Sciatic nerve (tissue), 2 donors: ENCODE measurements at regions of chr12 and their contacts with region 1.

Region 1: DNA sequence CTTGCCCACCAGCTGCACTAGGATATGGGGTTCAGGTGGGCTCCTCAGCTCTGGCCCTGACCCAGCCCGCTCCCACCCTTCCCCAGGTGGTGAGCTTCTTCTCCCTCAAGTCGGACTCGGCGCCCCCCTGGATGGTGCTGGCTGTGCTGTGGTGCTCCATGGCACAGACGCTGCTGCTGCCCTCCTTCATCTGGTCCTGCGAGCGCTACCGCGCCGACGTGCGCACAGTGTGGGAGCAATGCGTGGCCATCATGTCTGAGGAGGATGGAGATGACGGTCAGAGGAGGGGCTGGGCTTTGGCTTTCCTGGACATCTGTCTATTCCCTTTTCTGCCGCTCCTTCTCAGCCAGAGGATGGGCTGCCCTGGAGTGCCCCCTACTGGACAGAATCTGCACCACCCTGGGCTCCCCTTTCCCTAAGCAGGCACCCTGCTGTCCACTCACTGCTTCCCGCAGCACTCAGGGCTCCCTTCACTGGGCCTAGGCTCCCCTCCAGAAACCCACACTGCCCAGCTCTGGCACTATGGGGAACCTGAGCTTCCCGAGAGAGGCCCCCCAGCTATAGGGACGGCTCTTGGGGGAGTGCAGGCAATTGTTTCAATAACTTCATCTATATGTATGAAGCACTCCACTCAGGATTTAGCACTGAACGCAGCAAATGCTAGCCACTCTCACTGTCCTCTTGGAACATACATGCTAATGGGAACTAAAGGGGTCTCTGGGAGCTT is 2.6 kb upstream of the P3H3 start:
- DNase-seq: peak; percentile 94
- ATAC-seq: peak; percentile 71

Region 2: GRCh38 chr12:6752921-6753771 is 72.4 kb before region 1 on chr12 and contains the start of gene MLF2:
- intact Hi-C with region 1: loop called (anchors 10 kb)
- DNase-seq: peak; percentile 99
- ATAC-seq: peak; percentile 97
- total RNA-seq, gene MLF2: 98.6 TPM